ENCODE measurements at regions of chr16 and their contacts with region 1.

Region 1: DNA sequence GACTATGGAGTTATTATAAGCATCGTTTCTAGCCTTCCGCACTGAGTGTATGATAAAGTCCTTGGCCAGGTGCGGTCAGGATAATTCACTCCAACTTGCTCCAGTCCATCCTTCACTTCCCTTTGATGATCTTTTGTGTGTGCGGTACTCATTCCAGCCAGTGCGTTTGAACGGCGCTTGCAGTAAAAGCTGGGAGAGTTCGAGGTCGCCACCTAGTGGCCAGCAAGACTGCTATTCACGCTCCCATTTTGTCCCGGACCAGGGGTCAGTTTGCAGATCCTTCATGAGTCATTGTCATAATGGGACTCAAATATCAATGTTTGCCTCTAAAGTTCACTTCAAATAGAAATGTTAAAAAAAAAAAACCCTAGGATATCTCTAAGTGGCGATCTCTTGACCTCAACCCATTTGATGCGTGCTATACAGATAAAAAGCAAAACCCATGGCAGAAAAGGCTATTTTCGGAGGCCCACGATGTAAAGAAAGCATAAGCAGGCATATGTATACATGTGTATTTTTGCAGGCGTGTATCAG is 417.1 kb downstream of the TMEM114 start:
- DNase-seq: peak; percentile 98
- ATAC-seq: peak; percentile 100
- H3K4me3 ChIP-seq: no peak overlapping the region
- H3K27ac ChIP-seq: no peak overlapping the region
- H3K4me1 ChIP-seq: peaks cover 6% of the 10 kb centered on the region
- H3K27me3 ChIP-seq: peaks cover 1 to 10% of the 10 kb centered on the region in 2 experiments; a peak in 3 of 5 replicates
- CTCF ChIP-seq: peak; percentile 96
- EP300 ChIP-seq: peak; percentile 46 to 74; a peak in 3 of 4 replicates
- POLR2A ChIP-seq: no peak
- RAD21 ChIP-seq: peak; percentile 92

Region 2: DNA sequence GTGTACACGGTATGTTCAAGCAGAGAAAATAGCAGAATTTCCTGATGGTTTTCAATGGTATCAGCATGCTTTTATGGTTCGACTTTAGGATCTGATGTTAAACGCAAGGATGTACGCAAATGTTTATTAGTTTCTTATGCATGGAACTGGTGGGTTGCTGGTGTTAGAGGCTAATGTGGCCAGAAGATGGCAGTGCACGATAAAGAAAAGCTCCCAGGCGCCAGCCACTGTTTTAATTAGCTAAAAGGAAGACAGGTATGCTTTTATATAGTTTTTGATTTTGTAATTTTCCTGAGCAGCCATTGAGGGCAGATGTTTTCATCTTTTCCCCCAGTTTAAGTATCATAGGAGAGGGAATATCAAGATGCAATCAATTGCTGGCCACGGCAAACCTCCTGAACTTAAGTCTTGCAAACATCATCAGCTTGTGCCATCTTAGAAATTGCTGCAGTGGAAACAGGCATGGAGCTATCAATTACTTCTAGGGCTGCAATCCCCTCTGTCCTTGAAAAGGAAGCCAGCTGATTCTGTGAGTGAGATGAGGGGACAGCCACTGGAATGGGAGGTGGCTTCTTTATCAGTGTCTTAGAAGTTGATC is 1489.0 kb before region 1 on chr16:
- CTCF ChIA-PET with region 1: interaction called, 13 read pairs
- POLR2A ChIA-PET with region 1: no interaction called
- in situ Hi-C with region 1: no loop called
- intact Hi-C with region 1: no loop called
- DNase-seq: peak; percentile 5
- ATAC-seq: peak; percentile 48; the same call in 1 of the 3 replicates
- H3K4me3 ChIP-seq: no peak overlapping the region
- H3K27ac ChIP-seq: no peak overlapping the region
- H3K4me1 ChIP-seq: no peaks in the 10 kb centered on the region
- H3K27me3 ChIP-seq: no peaks in the 10 kb centered on the region
- CTCF ChIP-seq: peak; percentile 62
- EP300 ChIP-seq: no peak
- POLR2A ChIP-seq: no peak
- RAD21 ChIP-seq: no peak

Region 3: DNA sequence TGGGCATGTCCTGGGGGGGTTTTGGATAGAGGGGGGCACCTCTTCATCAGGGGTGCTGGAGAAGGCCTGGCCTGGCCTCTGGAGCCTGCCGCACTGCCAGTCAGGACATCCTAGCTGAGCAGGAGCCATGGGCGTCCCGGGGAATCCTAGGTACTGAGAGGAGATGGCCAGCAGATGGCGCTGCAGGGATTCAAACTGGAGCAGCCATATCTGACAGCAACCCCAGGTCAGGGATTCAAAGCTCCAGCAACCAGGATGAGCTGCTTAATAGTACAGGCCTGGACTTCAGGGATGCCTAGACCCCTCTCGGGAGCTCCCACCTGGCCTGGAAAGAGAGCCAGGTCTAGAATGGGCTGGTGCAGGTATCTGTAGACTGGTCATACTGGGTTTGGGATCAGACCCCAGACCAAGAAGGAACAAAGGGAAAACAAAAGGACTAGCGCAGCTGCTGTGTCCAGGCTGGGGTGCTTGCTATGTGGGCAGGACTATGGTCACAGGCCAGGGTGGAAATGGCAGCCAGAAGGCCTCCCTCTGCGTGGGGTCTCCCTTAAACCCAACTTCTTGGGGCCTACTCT is 1147.5 kb before region 1 on chr16:
- CTCF ChIA-PET with region 1: interaction called, 10 read pairs
- POLR2A ChIA-PET with region 1: no interaction called
- in situ Hi-C with region 1: no loop called
- intact Hi-C with region 1: loop called (anchors 1 kb)
- DNase-seq: peak; percentile 71
- ATAC-seq: peak; percentile 99
- H3K4me3 ChIP-seq: no peak overlapping the region
- H3K27ac ChIP-seq: no peak overlapping the region
- H3K4me1 ChIP-seq: no peaks in the 10 kb centered on the region
- H3K27me3 ChIP-seq: no peaks in the 10 kb centered on the region
- CTCF ChIP-seq: peak; percentile 91
- EP300 ChIP-seq: no peak
- POLR2A ChIP-seq: no peak
- RAD21 ChIP-seq: peak; percentile 80

Region 4: GRCh38 chr16:7313170-7313569 is 860.0 kb before region 1 on chr16:
- CTCF ChIA-PET with region 1: interaction called, 12 read pairs
- POLR2A ChIA-PET with region 1: no interaction called
- in situ Hi-C with region 1: no loop called
- intact Hi-C with region 1: loop called (anchors 1 kb)
- DNase-seq: peak; percentile 18
- ATAC-seq: peak; percentile 62; the same call in 2 of the 3 replicates
- H3K4me3 ChIP-seq: no peak overlapping the region
- H3K27ac ChIP-seq: no peak overlapping the region
- H3K4me1 ChIP-seq: no peaks in the 10 kb centered on the region
- H3K27me3 ChIP-seq: peaks cover 1 to 21% of the 10 kb centered on the region in 2 experiments; a peak in 2 of 5 replicates
- CTCF ChIP-seq: peak; percentile 36; the same call in 1 of the 2 replicates
- EP300 ChIP-seq: no peak
- POLR2A ChIP-seq: no peak
- RAD21 ChIP-seq: no peak

Measured in HepG2 (cell line).